Posterior cingulate gyrus (tissue), 11 donors: ENCODE measurements at regions of chr2 and their contacts with region 1.

Region 1: DNA sequence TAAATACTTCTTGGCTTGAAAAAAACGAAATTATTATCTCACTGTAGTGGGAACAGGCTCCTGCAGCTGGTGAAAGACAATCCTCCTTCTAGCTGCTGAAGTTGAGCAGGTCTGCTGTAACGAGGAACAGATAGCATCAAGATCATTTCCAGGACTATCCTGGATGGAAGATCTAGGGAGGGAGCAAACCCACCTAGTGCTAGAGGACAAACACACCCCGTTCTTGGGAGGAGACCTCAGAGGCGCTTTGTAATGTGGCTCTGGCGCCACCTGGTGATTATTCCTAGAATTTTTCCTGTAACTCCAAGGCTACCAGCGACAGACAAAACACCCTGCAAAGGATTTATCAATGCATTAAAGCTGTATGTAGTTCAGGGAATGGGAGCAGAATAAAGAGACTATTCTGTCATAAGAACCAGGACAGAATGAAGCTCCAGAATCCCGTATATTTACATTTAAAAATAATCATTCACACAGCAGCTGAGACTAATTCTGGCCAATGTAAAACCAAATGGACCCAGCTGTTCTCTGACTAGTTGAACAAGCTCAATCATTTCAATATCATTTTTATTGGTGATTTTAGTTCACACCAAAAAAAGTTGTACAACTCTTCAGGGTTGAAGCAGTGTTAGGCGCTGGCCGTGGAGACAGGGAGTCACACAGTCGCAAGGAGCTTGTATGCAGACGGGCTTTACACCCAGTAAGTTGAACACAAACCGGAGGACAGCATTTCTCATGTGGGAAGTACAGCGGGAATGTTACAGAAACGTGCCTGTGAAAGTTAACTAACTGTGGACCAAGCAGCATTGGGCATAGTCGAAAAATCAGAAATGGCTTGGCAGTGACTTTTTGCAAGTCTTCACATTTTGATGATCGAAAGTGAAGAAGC is 290.3 kb downstream of the TRIB2 start:
- DNase-seq: peak; percentile 17 to 92 (median 67)

Region 2: DNA sequence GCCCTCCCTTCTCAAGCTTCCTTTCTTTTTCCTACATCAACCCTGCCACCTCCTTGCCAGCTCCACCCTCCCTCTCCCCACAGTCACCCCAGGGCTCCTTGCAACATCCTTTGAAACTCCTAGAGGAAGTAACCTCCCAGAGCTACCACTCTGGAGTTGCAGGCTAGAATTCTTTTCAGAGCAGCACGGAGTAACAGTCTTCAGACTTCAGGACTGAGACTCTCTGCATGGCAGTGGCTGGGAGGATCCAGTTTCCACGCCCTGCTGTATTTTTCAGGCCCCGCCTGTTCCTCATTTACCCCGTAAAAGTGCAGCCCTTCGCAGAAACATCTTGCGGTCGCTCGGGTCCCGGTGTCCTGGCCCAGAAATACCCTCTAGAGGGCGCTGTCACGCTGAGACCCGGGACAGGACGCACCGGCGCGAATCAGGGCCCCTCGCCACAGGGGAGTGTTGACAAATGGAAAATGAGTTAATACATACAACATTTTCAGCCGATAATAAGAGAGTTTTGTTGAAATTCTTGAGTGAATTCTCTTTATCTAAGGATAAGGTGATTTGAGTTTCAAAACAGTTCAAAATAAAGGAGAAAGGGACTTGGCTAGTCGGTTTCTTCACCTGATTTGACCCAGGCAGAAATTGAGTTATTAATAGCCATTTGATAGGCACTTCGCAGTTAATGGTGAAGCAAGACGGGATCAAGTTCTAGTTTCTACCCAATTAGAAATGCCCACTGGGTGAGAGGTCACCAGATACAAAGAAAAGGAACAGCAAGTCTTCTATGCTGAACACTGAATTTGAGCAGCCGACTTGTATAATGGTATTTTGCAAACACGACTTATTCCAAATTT is 1318.6 kb before region 1 on chr2:
- intact Hi-C with region 1: loop called (anchors 10 kb)
- DNase-seq: peak in 8 of 10 donors; percentile 57 to 92 (median 76)

Region 3: GRCh38 chr2:11829947-11830707 is 1176.9 kb before region 1 on chr2:
- intact Hi-C with region 1: loop called (anchors 5 kb)
- DNase-seq: peak; percentile 43 to 95 (median 74)

Region 4: GRCh38 chr2:12169721-12170120 is 837.4 kb before region 1 on chr2:
- intact Hi-C with region 1: loop called (anchors 5 kb)
- DNase-seq: peak in 1 of 10 donors; percentile 13

Region 5: DNA sequence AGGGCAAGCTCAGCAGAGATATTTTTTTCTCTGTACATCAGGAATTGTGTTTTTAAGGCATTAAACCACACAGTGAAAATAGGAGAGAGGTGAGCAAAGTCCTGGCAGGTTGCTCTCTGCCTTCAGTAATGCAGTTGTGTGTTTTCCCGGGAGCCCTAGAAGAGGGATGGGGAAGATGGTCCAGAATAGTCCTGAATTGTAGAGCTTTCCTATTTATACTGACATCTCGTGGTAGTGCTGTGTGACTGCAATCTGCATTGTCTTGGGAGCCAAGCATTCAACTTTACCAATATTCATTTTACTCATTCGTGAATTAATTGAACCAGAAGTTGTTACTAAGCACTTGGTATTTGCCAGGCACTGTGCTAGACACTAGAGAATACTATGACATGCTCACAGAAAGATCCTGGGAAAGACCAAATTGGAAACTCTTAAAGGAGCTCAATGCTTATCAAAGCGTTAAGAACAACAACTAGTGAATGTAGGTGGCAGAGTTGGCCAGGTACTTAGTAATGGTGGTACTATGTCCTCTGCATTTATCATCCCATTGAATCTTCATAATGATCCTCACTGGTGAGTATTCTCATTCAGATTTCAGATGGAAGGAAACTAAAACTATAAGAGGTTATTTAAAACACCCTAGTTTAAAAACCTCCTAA is 75.8 kb before region 1 on chr2:
- intact Hi-C with region 1: loop called (anchors 10 kb)
- DNase-seq: peak in 1 of 10 donors; percentile 11

Region 6: DNA sequence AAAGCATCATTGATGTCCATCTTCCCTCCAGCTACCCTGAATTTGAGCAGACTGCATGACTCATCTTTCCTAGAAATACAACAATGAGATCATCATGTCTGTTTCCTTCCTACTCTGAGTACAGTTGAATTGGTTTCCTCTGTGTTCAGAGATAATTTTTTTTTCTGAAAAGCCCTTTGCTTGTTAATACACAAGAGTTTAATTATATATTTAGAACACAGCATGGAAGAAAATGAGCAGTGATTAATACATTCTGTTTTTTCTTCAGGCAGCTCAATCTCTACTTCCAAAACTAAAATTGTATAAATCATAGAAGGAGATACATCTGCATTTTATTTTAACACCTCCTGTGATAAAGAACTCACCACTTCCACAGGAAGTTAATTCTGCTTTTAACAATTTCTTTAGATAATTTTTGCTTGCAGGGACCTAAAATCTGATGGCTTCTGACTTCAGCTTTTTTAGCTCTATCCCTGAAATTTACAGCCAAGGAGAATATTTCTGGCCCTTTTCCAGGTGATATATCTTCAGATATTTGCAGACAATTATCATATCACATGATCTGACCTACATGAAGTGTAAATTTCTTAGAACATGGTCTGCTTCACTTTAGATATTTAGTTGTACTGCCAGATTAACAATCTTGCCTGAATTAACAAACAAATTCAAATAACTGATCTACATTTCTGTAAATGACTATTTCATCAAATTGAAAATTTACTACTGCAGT is 41.4 kb before region 1 on chr2:
- intact Hi-C with region 1: no loop called
- DNase-seq: no peak

Region 7: GRCh38 chr2:13180729-13181128 is 173.7 kb after region 1 on chr2:
- intact Hi-C with region 1: no loop called
- DNase-seq: no peak